H1 (cell line): ENCODE measurements at regions of chr10 and their contacts with region 1.

Region 1: GRCh38 chr10:28939281-28940157 is 262.2 kb downstream of the BAMBI start:
- DNase-seq: peak; percentile 61 to 92
- H3K4me3 ChIP-seq: peak overlapping the region; percentile 23 to 62 (median 54); a peak in 7 of 8 replicates
- H3K27ac ChIP-seq: peak overlapping the region; percentile 9; the same call in 1 of the 2 replicates
- H3K4me1 ChIP-seq: no peaks in the 10 kb centered on the region
- H3K27me3 ChIP-seq: no peaks in the 10 kb centered on the region
- CTCF ChIP-seq: peak; percentile 84 to 89 (median 88)
- EP300 ChIP-seq: peak; percentile 40 to 90
- POLR2A ChIP-seq: no peak
- RAD21 ChIP-seq: peak; percentile 56 to 68

Region 2: GRCh38 chr10:28920091-28920490 is 19.4 kb before region 1 on chr10:
- CTCF ChIA-PET with region 1: interaction called, 27 read pairs
- POLR2A ChIA-PET with region 1: interaction called, 3 read pairs
- DNase-seq: no peak
- H3K4me3 ChIP-seq: no peak overlapping the region
- H3K27ac ChIP-seq: no peak overlapping the region
- H3K4me1 ChIP-seq: peaks cover 0 to 3% (median 0%) of the 10 kb centered on the region in 4 experiments; a peak in 1 of 7 replicates
- H3K27me3 ChIP-seq: no peaks in the 10 kb centered on the region
- CTCF ChIP-seq: no peak
- EP300 ChIP-seq: no peak
- POLR2A ChIP-seq: no peak
- RAD21 ChIP-seq: no peak

Region 3: DNA sequence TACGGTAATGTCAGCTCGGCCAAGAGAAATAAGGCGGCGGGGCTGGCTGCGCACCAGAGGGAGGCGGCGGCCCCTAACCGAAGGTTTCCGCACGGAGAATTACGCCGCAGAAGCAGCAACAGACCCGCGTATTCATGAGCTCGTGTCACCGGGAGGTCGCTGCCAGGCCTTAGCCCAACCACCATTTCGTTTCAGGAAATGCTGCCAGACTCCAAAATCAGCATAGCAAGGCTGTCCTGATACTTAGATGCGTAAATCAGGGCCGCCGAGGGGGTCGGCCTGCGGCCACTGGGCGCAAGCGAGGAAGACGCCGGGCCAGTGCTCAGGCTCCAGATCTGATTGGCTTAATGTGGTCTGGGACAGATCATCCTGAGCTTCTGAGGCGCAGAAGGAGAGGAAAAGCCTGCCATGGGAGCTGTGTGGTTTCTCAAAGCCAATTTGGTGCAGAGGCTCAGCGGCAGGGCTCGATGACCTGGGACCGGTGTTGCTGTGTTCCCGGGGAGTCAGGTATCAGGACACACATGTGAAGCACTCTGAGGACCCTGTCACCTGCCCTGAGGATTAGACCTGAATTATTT is 14.3 kb before region 1 on chr10:
- CTCF ChIA-PET with region 1: interaction called, 27 read pairs
- POLR2A ChIA-PET with region 1: interaction called, 3 read pairs
- DNase-seq: no peak
- H3K4me3 ChIP-seq: peak overlapping the region in 1 of 4 experiments; percentile 6; a peak in 2 of 8 replicates
- H3K27ac ChIP-seq: no peak overlapping the region
- H3K4me1 ChIP-seq: peaks cover 0 to 3% (median 0%) of the 10 kb centered on the region in 4 experiments; a peak in 1 of 7 replicates
- H3K27me3 ChIP-seq: no peaks in the 10 kb centered on the region
- CTCF ChIP-seq: no peak
- EP300 ChIP-seq: no peak
- POLR2A ChIP-seq: no peak
- RAD21 ChIP-seq: no peak

Region 4: GRCh38 chr10:28970231-28970630 is 30.7 kb after region 1 on chr10:
- CTCF ChIA-PET with region 1: interaction called, 10 read pairs
- POLR2A ChIA-PET with region 1: no interaction called
- DNase-seq: no peak
- H3K4me3 ChIP-seq: no peak overlapping the region
- H3K27ac ChIP-seq: no peak overlapping the region
- H3K4me1 ChIP-seq: peaks cover 0 to under 1% (median 0%) of the 10 kb centered on the region in 4 experiments; a peak in 1 of 7 replicates
- H3K27me3 ChIP-seq: no peaks in the 10 kb centered on the region; a peak in 1 of 7 replicates
- CTCF ChIP-seq: no peak
- EP300 ChIP-seq: no peak
- POLR2A ChIP-seq: no peak
- RAD21 ChIP-seq: no peak

Region 5: GRCh38 chr10:29257106-29257783 is 317.7 kb after region 1 on chr10:
- CTCF ChIA-PET with region 1: interaction called, 12 read pairs
- POLR2A ChIA-PET with region 1: no interaction called
- DNase-seq: no peak
- H3K4me3 ChIP-seq: no peak overlapping the region
- H3K27ac ChIP-seq: no peak overlapping the region
- H3K4me1 ChIP-seq: peaks cover 0 to 3% (median under 1%) of the 10 kb centered on the region in 4 experiments; a peak in 2 of 7 replicates
- H3K27me3 ChIP-seq: no peaks in the 10 kb centered on the region
- CTCF ChIP-seq: no peak
- EP300 ChIP-seq: no peak
- POLR2A ChIP-seq: no peak
- RAD21 ChIP-seq: no peak